ENCODE measurements at regions of chr2 and their contacts with region 1.

Region 1: DNA sequence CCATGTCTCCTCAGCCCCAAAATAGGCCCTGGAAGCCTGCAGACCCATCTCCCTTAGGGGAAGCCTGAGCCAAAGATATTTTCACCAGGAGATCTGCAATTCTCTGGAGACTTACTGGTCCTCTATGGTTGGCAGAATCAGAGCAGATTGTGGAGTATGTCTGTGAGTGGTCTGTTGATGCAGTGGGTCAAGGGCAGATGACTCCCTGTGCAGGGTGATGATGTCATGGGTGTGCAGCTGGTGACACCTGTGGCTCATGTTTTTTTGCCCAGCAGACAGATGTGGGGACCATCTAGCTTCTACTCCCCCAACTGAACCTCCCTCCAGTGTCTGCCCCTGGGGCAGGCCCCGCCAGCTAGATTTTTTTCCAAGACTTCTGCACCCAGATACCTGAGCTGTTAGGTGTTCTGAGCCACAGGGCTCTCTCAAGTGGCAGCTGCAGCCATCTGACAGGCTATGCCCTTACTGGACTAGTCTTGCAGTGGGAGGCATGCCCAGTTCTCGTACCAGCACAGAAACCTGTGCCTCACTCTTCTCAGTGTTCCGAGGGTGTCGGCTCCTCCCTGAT is 558.7 kb upstream of the LRRTM1 start:
- DNase-seq: no peak
- H3K4me3 ChIP-seq: no peak overlapping the region
- H3K27ac ChIP-seq: no peak overlapping the region
- H3K4me1 ChIP-seq: 0 out of 7 replicates have a peak, but pooled peaks cover 0 to 3% (median 0%) of the 10 kb centered on the region in 4 experiments
- H3K27me3 ChIP-seq: no peaks in the 10 kb centered on the region
- CTCF ChIP-seq: no peak
- EP300 ChIP-seq: no peak
- POLR2A ChIP-seq: no peak
- RAD21 ChIP-seq: no peak

Region 2: DNA sequence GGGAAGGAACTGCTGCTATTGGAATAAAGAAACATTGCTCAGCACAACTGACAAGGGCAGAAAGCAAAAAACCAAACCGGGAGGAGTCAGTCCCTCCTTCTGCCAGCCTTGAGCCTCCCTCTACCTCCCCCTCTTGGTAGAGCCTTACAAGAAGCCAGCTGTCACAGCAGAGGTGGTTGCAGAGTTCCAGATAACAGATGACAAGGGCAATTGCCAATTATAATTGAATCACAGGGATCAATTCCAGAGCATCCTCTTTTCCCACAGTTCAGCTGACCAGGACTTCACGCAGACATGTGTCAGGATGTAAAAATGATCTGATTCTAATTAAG is 10.5 kb before region 1 on chr2:
- CTCF ChIA-PET with region 1: interaction called, 27 read pairs
- POLR2A ChIA-PET with region 1: no interaction called
- DNase-seq: peak in 1 of 2 experiments; percentile 48
- H3K4me3 ChIP-seq: no peak overlapping the region
- H3K27ac ChIP-seq: no peak overlapping the region
- H3K4me1 ChIP-seq: no peaks in the 10 kb centered on the region
- H3K27me3 ChIP-seq: no peaks in the 10 kb centered on the region
- CTCF ChIP-seq: peak; percentile 59 to 79 (median 62)
- EP300 ChIP-seq: no peak
- POLR2A ChIP-seq: no peak
- RAD21 ChIP-seq: peak; percentile 57 to 72